ENCODE measurements at regions of chr4 and their contacts with region 1.

Region 1: DNA sequence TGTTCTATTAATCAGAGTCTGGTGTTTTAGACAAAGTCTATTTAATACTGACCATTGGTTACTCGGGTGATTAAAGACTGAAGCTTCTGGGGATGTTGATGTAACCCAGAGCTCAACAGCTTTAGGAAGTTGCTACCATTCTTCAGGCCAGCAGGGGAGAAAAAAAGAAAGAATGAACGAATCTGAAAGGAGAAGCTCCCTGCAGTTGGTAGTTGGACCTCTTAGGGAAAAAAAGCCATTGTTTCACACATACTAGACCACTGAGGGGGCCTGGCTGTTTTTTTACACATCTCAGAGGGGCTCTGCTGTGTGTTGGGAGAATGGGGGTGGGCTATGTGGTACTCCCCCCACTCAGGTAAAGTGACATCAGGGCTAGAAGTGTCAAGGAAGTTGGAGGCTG is 378.9 kb downstream of the KCNIP4 start:
- DNase-seq: no peak
- ATAC-seq: no peak
- H3K4me3 Mint-ChIP-seq: no peak overlapping the region
- H3K27ac Mint-ChIP-seq: no peak overlapping the region
- H3K4me1 Mint-ChIP-seq: no peaks in the 10 kb centered on the region
- H3K27me3 Mint-ChIP-seq: no peaks in the 10 kb centered on the region

Region 2: GRCh38 chr4:21512353-21512752 is 57.3 kb before region 1 on chr4:
- CTCF ChIA-PET with region 1: no interaction called
- POLR2A ChIA-PET with region 1: no interaction called
- intact Hi-C with region 1: loop called in 1 of 2 experiments (anchors 5 kb)
- DNase-seq: no peak
- ATAC-seq: no peak
- H3K4me3 Mint-ChIP-seq: no peak overlapping the region
- H3K27ac Mint-ChIP-seq: no peak overlapping the region
- H3K4me1 Mint-ChIP-seq: no peaks in the 10 kb centered on the region
- H3K27me3 Mint-ChIP-seq: no peaks in the 10 kb centered on the region

Region 3: GRCh38 chr4:21726255-21726815 is 156.7 kb after region 1 on chr4:
- CTCF ChIA-PET with region 1: no interaction called
- POLR2A ChIA-PET with region 1: no interaction called
- intact Hi-C with region 1: no loop called
- DNase-seq: no peak
- ATAC-seq: no peak
- H3K4me3 Mint-ChIP-seq: no peak overlapping the region
- H3K27ac Mint-ChIP-seq: no peak overlapping the region
- H3K4me1 Mint-ChIP-seq: no peaks in the 10 kb centered on the region
- H3K27me3 Mint-ChIP-seq: peaks cover 2% of the 10 kb centered on the region

Region 4: GRCh38 chr4:23500894-23501449 is 1931.3 kb after region 1 on chr4:
- CTCF ChIA-PET with region 1: no interaction called
- POLR2A ChIA-PET with region 1: no interaction called
- intact Hi-C with region 1: loop called in 1 of 2 experiments (anchors 10 kb)
- DNase-seq: no peak
- ATAC-seq: no peak
- H3K4me3 Mint-ChIP-seq: no peak overlapping the region
- H3K27ac Mint-ChIP-seq: no peak overlapping the region
- H3K4me1 Mint-ChIP-seq: no peaks in the 10 kb centered on the region
- H3K27me3 Mint-ChIP-seq: no peaks in the 10 kb centered on the region

Measured in activated CD4-positive, alpha-beta T cell treated with anti-CD3 and anti-CD28 coated beads for 36 hours (primary cell).